ENCODE measurements at regions of chr5 and their contacts with region 1.

Region 1: GRCh38 chr5:35926389-35927051 is 11.9 kb downstream of the CAPSL start:
- DNase-seq: peak; percentile 76
- ATAC-seq: peak; percentile 42
- H3K4me3 Mint-ChIP-seq: peak overlapping the region; percentile 78
- H3K27ac Mint-ChIP-seq: peak overlapping the region; percentile 69
- H3K4me1 Mint-ChIP-seq: peaks cover 49% of the 10 kb centered on the region
- H3K27me3 Mint-ChIP-seq: no peaks in the 10 kb centered on the region

Region 2: GRCh38 chr5:35089334-35090314 is 836.9 kb before region 1 on chr5:
- CTCF ChIA-PET with region 1: interaction called, 12 read pairs
- POLR2A ChIA-PET with region 1: no interaction called
- intact Hi-C with region 1: loop called (anchors 1 kb)
- DNase-seq: peak; percentile 73
- ATAC-seq: no peak
- H3K4me3 Mint-ChIP-seq: no peak overlapping the region
- H3K27ac Mint-ChIP-seq: no peak overlapping the region
- H3K4me1 Mint-ChIP-seq: peaks cover 3% of the 10 kb centered on the region
- H3K27me3 Mint-ChIP-seq: peaks cover 10% of the 10 kb centered on the region

Region 3: GRCh38 chr5:35478856-35479682 is 447.5 kb before region 1 on chr5:
- CTCF ChIA-PET with region 1: no interaction called
- POLR2A ChIA-PET with region 1: no interaction called
- intact Hi-C with region 1: loop called in 1 of 2 experiments (anchors 5 kb)
- DNase-seq: no peak
- ATAC-seq: peak; percentile 89
- H3K4me3 Mint-ChIP-seq: peak overlapping the region; percentile 35
- H3K27ac Mint-ChIP-seq: peak overlapping the region; percentile 83
- H3K4me1 Mint-ChIP-seq: peaks cover 11% of the 10 kb centered on the region
- H3K27me3 Mint-ChIP-seq: peaks cover 2% of the 10 kb centered on the region

Region 4: DNA sequence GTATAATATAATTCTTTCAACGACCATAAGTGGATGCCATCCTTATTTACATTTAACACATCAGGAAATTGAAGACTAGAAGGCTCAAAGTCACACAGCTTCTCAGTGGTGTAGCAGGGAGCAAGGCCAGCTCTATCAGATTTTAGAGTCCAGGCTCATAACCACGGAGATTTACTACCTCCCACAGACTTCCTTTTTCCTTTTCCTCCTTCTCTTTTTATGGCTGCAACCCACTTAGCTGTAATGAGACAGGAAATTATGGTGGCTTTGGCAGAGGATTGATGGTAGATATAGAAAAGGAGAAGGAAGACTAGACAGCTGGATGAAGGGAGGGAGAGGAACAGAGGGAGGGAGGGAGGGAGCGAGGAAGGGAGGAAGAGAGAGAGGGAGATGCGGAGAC is 261.4 kb before region 1 on chr5:
- CTCF ChIA-PET with region 1: interaction called, 31 read pairs
- POLR2A ChIA-PET with region 1: no interaction called
- intact Hi-C with region 1: no loop called
- DNase-seq: no peak
- ATAC-seq: no peak
- H3K4me3 Mint-ChIP-seq: no peak overlapping the region
- H3K27ac Mint-ChIP-seq: peak overlapping the region; percentile 7
- H3K4me1 Mint-ChIP-seq: peaks cover 55% of the 10 kb centered on the region
- H3K27me3 Mint-ChIP-seq: no peaks in the 10 kb centered on the region

Region 5: GRCh38 chr5:35822511-35822910 is 104.0 kb before region 1 on chr5:
- CTCF ChIA-PET with region 1: interaction called, 27 read pairs
- POLR2A ChIA-PET with region 1: interaction called, 7 read pairs
- intact Hi-C with region 1: no loop called
- DNase-seq: peak; percentile 63
- ATAC-seq: no peak
- H3K4me3 Mint-ChIP-seq: peak overlapping the region; percentile 58
- H3K27ac Mint-ChIP-seq: peak overlapping the region; percentile 98
- H3K4me1 Mint-ChIP-seq: peaks cover 89% of the 10 kb centered on the region
- H3K27me3 Mint-ChIP-seq: no peaks in the 10 kb centered on the region

Region 6: DNA sequence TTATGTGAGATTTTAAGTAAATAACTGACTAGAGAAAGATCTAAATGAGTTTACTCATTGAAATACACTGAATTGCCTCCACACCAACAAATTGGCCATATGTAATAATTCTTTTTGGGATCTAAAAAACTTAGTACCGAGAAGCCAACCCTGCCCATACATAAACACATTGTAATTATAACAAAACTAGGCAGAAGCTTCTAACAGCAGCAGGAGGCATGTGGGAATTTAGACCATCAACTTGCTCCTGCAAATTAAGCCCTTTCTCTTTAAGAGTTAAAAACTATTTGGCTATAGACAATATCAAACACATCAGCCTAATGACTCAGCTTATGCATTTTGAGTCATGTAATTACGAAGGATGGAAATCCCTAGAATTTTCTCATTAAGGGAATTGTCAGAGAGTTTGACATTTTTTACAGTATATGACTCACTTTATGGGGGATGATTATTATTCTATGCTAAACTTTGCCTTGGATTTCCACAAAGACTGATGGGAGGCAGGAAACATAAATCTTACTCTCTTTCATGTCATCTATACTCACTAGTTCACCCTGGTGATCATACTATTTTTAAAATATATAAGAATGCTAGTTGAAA is 68.8 kb before region 1 on chr5:
- CTCF ChIA-PET with region 1: interaction called, 38 read pairs
- POLR2A ChIA-PET with region 1: interaction called, 8 read pairs
- intact Hi-C with region 1: loop called (anchors 1 kb)
- DNase-seq: no peak
- ATAC-seq: no peak
- H3K4me3 Mint-ChIP-seq: peak overlapping the region; percentile 89
- H3K27ac Mint-ChIP-seq: peak overlapping the region; percentile 99
- H3K4me1 Mint-ChIP-seq: peaks cover 71% of the 10 kb centered on the region
- H3K27me3 Mint-ChIP-seq: no peaks in the 10 kb centered on the region